ENCODE measurements at regions of chr19 and their contacts with region 1.

Region 1: DNA sequence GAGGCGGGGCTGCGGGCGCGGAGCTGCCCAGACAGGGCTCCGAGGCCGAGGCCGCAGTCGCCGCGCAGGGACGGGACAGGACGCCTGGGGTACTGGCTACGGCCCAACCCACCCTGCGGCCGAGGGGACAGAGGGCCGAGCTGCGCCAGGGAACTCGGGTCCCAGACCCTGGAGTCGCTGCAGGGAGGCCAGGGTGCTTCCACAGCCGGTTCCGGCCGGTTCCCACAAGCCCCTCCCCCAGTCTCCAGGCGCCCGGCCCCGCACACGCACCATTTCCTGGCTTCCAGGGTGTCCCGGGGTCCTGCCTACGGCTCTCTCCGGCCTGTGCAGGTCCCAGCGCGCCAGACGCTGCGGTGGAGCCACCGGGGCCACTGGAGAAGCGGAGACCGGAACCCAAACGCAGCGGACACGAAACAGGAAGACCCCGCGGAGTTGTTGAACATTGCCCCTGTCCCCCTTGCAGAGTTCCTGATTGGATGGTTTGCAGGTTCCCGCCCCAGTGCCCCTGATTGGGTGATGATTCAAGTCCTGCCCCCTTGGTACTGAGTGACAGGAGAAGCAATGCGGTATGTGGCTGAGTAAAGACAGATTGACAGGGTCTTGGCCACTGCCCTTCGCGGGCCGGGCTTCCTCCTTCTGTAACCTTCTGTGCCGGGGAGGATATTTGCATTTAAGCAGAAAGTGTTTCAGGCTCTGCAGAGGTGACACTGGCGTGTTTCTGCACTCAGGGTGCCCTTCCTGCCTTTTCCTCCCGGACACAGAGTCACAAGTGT is at the start of gene ZNF564:
- DNase-seq: peak; percentile 97
- H3K4me3 Mint-ChIP-seq: peak within 1 kb of the TSS; percentile 99
- H3K27ac Mint-ChIP-seq: peak within 1 kb of the TSS; percentile 96
- H3K4me1 Mint-ChIP-seq: peaks cover 37% of the 10 kb centered on the region
- H3K27me3 Mint-ChIP-seq: no peaks in the 10 kb centered on the region
- total RNA-seq, gene ZNF564: 5.6 to 5.7 TPM

Region 2: DNA sequence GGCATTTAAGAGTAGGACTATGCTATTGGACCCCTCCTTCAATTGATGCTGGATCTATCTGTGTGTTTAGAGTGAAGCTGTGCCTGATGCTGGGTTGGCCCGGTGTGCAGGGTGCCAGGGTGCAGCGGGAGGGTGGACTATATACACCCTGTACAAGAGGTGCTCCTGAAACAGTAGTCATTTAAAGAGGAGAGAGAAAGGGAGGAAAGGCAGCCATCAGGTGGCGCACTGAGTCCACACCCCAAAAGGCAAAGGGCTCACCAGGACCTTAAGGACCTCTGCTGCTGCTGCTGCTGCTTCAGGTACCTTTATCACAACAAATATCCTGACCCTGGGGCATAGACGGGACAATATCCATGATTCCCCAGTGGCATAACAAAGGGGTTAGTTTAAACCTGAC is 349.0 kb before region 1 on chr19:
- CTCF ChIA-PET with region 1: no interaction called
- intact Hi-C with region 1: loop called (anchors 2 kb)
- DNase-seq: peak; percentile 84
- H3K4me3 Mint-ChIP-seq: no peak overlapping the region
- H3K27ac Mint-ChIP-seq: no peak overlapping the region
- H3K4me1 Mint-ChIP-seq: peaks cover 22% of the 10 kb centered on the region
- H3K27me3 Mint-ChIP-seq: no peaks in the 10 kb centered on the region

Region 3: GRCh38 chr19:12440541-12441316 is 110.5 kb before region 1 on chr19 and contains the start of gene ZNF443:
- CTCF ChIA-PET with region 1: no interaction called
- intact Hi-C with region 1: loop called (anchors 2 kb)
- DNase-seq: peak; percentile 100
- H3K4me3 Mint-ChIP-seq: peak within 1 kb of the TSS; percentile 100
- H3K27ac Mint-ChIP-seq: peak within 1 kb of the TSS; percentile 96
- H3K4me1 Mint-ChIP-seq: peaks cover 6% of the 10 kb centered on the region
- H3K27me3 Mint-ChIP-seq: no peaks in the 10 kb centered on the region
- total RNA-seq, gene ZNF443: 3.7 to 4.1 TPM

Region 4: DNA sequence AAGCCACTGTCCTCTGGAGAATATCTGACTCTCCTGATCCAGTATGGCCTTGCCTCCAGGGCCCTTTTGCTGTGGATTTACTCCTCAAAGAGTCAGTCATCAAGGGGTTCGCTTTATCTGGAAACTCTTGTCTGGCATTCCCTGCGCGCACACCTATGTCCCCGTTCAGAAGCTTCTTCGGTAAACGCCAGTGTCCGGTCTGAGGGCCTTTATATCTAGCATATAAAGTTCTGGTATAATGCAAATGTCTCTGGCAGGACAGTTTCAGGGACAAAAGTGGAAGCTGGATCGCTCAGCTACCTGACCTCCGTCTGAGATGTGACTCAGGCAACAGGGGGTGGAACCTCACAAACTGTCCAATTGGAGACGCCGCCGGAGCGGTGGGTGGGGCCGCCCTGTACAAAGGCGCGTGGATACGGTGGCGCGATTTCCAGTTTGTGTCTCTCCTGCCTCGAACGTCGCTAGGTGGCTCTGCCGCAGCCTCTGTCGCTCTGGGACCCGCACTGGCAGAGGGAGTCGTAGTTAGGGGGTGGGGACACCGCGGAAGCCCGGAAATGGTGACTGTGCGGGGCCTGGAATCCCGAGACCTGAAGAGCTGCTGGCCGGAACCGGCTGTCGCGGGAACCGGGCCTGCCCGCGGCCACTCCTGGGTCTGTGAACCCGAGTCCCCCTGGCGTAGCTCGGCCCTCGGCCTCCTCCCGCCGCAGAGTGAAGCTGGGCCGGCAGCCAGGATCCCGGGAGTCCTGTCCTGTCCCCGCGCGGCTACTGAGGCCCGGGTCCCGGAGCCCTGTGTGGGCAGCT is 56.0 kb before region 1 on chr19:
- CTCF ChIA-PET with region 1: interaction called, 5 read pairs
- intact Hi-C with region 1: loop called (anchors 1 kb)
- DNase-seq: peak; percentile 98
- H3K4me3 Mint-ChIP-seq: peak overlapping the region; percentile 87
- H3K27ac Mint-ChIP-seq: peak overlapping the region; percentile 89
- H3K4me1 Mint-ChIP-seq: peaks cover 9% of the 10 kb centered on the region
- H3K27me3 Mint-ChIP-seq: no peaks in the 10 kb centered on the region

Measured in activated naive CD4-positive, alpha-beta T cell treated with anti-CD3 and anti-CD28 coated beads for 36 hours (primary cell).